PC-3 (cell line): ENCODE measurements at regions of chr11 and their contacts with region 1.

Region 1: DNA sequence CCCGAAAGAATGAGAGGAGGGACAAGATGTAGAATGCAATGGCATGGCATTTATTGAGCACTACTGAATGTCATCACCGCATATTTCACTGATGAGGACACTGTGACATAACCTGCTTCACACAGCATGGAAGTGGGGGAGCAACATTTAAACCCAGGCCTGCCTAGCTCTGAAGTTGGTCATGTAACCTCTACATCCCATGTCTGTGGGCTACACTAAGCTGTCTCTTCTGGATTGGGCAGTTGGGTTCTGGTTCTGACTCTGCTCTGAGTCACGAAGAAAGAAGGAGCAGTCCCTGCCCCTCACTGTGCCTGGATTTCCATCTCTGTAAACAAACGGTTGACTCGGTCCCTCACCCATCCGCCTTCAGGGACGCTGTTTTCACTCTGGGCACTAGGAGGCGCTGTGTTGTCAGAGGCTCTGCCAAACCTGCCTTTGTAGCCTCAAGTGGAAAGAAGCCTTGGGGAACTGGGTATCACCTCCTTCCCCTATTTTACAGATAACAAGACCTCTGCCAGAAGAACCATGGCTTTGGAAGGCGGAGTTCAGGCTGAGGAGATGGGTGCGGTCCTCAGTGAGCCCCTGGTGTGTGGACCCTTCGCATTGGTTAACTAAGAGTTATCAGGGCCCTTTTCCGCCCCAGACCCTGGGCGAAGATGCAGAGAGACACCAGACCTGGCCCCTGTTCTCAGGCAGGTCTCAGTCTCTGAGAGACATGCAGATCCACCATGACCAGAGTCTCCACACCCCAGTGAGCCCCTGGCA is 12.7 kb upstream of the ARHGEF17 start:
- DNase-seq: peak; percentile 94
- ATAC-seq: peak; percentile 82
- H3K4me3 ChIP-seq: no peak overlapping the region
- H3K27ac ChIP-seq: no peak overlapping the region
- H3K4me1 ChIP-seq: peaks cover 10% of the 10 kb centered on the region
- H3K27me3 ChIP-seq: no peaks in the 10 kb centered on the region
- CTCF ChIP-seq: peak; percentile 99

Region 2: DNA sequence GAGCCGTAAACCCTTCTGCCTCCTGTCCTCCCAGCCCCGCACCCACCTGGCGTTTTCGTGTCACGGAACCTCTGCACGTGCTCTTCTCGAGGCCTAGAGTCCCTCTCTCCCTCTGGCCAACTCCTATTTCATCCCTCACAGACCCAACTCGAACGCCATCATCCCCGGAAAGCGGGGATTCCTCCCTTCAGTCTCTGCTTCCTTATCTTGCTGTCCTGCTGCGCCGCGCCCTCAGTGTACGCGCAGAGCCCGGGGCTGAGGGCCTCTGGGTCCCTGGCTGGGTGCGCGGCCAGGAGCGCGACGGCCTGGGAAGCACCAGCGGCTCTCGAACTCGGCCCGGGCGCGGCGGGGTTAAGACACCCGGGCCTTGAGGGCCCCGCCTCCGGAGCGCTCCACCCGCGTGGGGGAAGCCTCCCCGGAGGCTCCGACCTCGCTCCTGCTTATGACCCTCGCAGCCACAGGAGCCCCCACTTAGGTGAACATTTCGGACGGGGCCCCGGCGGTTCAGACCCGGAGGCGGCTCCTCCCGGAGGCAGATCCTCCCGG is 481.6 kb before region 1 on chr11:
- CTCF ChIA-PET with region 1: no interaction called
- POLR2A ChIA-PET with region 1: no interaction called
- intact Hi-C with region 1: no loop called
- DNase-seq: peak; percentile 81
- ATAC-seq: peak; percentile 71
- H3K4me3 ChIP-seq: peak overlapping the region; percentile 79
- H3K27ac ChIP-seq: peak overlapping the region; percentile 89
- H3K4me1 ChIP-seq: peaks cover 30% of the 10 kb centered on the region
- H3K27me3 ChIP-seq: no peaks in the 10 kb centered on the region
- CTCF ChIP-seq: no peak

Region 3: GRCh38 chr11:73085189-73085875 is 210.1 kb before region 1 on chr11:
- CTCF ChIA-PET with region 1: no interaction called
- POLR2A ChIA-PET with region 1: no interaction called
- intact Hi-C with region 1: no loop called
- DNase-seq: peak; percentile 26
- ATAC-seq: no peak
- H3K4me3 ChIP-seq: no peak overlapping the region
- H3K27ac ChIP-seq: no peak overlapping the region
- H3K4me1 ChIP-seq: no peaks in the 10 kb centered on the region
- H3K27me3 ChIP-seq: no peaks in the 10 kb centered on the region
- CTCF ChIP-seq: no peak

Region 4: GRCh38 chr11:73242251-73243079 is 52.9 kb before region 1 on chr11:
- CTCF ChIA-PET with region 1: interaction called, 11 read pairs
- POLR2A ChIA-PET with region 1: no interaction called
- intact Hi-C with region 1: no loop called
- DNase-seq: peak; percentile 74
- ATAC-seq: peak; percentile 73
- H3K4me3 ChIP-seq: no peak overlapping the region
- H3K27ac ChIP-seq: no peak overlapping the region
- H3K4me1 ChIP-seq: peaks cover 22% of the 10 kb centered on the region
- H3K27me3 ChIP-seq: no peaks in the 10 kb centered on the region
- CTCF ChIP-seq: peak; percentile 95

Region 5: DNA sequence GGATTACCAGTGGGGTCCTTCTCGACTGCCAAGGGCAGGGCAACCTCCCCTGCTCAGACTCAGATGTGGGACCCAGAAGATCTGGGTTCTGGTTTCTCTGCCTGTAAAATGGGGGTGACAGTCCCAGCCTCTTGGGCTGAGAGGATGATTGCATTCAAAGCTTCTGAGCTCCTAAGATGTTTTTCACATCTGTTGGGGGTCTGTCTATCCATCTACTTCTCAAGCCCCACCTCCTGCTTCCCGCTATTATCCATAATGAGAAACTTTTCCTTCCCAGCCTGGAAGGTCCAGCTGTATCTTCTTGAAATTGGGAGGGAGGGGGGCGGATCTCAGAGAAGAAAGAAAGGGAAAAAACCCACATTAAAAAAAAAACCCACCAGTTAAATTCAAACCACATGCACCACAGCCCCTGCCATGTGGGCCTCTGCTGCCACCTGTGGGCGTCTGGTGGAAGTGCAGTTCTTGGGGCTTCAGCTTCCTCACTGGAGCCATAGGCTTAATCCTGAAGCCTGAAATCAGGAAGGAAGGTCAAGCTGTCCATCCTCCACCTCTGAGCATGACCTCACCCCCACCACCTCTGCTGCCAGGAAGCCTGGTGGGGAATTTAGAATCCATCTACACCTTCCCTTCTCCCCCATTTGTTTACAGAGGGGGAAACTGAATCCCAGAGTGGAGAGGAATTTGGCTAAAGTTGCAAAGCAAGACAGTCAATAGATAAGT is 40.0 kb after region 1 on chr11:
- CTCF ChIA-PET with region 1: interaction called, 3 read pairs
- POLR2A ChIA-PET with region 1: no interaction called
- intact Hi-C with region 1: loop called (anchors 1 kb)
- DNase-seq: peak; percentile 94
- ATAC-seq: peak; percentile 80
- H3K4me3 ChIP-seq: no peak overlapping the region
- H3K27ac ChIP-seq: no peak overlapping the region
- H3K4me1 ChIP-seq: peaks cover 13% of the 10 kb centered on the region
- H3K27me3 ChIP-seq: no peaks in the 10 kb centered on the region
- CTCF ChIP-seq: peak; percentile 98